ENCODE measurements at regions of chr9 and their contacts with region 1.

Region 1: DNA sequence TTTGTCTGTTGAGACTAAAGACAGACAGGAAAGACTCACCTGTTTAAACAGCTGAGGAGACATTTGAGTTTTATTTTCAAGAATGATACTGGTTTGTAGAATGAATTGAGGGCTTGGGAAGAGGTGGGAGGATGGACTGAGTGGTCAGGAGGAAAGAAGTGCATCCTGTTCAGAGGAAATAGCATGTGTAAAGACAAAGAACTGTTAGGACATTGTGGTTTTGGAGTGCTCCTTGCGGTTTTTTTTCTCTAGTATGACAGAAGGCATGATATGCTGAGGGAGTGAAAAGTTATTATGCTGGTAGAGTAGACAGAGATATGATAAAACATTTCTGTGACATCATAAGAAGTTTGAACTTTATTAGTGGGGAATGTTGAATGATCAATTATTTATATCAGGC is 270.7 kb upstream of the ELAVL2 start:
- DNase-seq: no peak
- H3K4me3 Mint-ChIP-seq: no peak overlapping the region
- H3K27ac Mint-ChIP-seq: no peak overlapping the region
- H3K4me1 Mint-ChIP-seq: no peaks in the 10 kb centered on the region
- H3K27me3 Mint-ChIP-seq: no peaks in the 10 kb centered on the region

Region 2: GRCh38 chr9:24041160-24041690 is 55.5 kb before region 1 on chr9:
- intact Hi-C with region 1: loop called (anchors 10 kb)
- DNase-seq: no peak
- H3K4me3 Mint-ChIP-seq: no peak overlapping the region
- H3K27ac Mint-ChIP-seq: no peak overlapping the region
- H3K4me1 Mint-ChIP-seq: no peaks in the 10 kb centered on the region
- H3K27me3 Mint-ChIP-seq: no peaks in the 10 kb centered on the region